A673 (cell line): ENCODE measurements at regions of chr7 and their contacts with region 1.

Region 1: DNA sequence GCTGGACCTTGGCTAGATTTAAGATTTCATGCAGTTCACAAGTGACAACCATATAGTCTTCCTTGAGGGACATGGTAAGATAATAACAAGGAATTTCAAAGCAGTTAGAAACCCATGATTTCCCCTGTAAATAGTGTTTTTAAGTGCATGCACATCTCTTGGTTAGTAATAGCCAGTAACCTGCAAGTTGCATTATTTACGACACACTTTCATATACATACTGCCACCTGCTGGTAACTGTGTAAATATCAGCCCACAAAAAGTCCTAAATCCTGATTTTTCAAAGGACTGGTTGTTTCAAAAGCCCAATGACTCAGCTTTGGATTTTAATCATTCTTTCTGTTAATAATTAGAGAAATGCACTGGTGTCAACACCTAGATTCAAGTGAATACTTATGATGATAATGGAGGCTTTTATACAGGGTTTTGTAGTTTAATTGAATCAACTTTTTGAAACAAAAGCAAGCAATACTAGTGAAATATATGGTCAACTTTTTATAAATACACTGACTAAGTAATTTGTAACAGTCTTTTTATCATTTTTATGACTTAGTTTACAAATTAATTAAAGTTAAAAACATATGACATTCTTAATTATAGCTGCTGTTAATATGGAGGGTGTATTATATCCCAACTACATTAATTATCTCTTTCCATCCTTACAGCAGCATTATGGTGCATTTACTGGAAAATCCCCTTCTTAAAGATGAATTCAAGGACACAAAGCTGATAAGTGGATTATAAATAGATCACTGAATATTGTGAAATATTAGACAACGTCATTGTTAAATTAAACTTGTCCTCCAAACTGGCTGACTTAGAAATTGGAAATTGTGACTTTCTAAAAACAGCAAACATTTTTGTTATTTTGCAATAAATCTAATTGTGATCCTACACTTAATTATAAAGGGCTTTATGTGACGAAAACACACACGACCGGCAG is 367.7 kb upstream of the SEMA3D start:
- DNase-seq: peak; percentile 74
- H3K4me3 ChIP-seq: no peak overlapping the region
- H3K27ac ChIP-seq: no peak overlapping the region
- H3K4me1 ChIP-seq: no peaks in the 10 kb centered on the region
- H3K27me3 ChIP-seq: no peaks in the 10 kb centered on the region
- CTCF ChIP-seq: peak; percentile 80

Region 2: GRCh38 chr7:83936056-83936708 is 1618.3 kb before region 1 on chr7:
- CTCF ChIA-PET with region 1: no interaction called
- POLR2A ChIA-PET with region 1: no interaction called
- intact Hi-C with region 1: loop called (anchors 10 kb)
- DNase-seq: peak; percentile 88
- H3K4me3 ChIP-seq: no peak overlapping the region
- H3K27ac ChIP-seq: no peak overlapping the region
- H3K4me1 ChIP-seq: peaks cover 5% of the 10 kb centered on the region
- H3K27me3 ChIP-seq: no peaks in the 10 kb centered on the region
- CTCF ChIP-seq: peak; percentile 94

Region 3: GRCh38 chr7:85030893-85031292 is 523.6 kb before region 1 on chr7:
- CTCF ChIA-PET with region 1: no interaction called
- POLR2A ChIA-PET with region 1: no interaction called
- intact Hi-C with region 1: loop called (anchors 2 kb)
- DNase-seq: peak; percentile 83
- H3K4me3 ChIP-seq: no peak overlapping the region
- H3K27ac ChIP-seq: no peak overlapping the region
- H3K4me1 ChIP-seq: peaks cover 5% of the 10 kb centered on the region
- H3K27me3 ChIP-seq: no peaks in the 10 kb centered on the region
- CTCF ChIP-seq: peak; percentile 75

Region 4: DNA sequence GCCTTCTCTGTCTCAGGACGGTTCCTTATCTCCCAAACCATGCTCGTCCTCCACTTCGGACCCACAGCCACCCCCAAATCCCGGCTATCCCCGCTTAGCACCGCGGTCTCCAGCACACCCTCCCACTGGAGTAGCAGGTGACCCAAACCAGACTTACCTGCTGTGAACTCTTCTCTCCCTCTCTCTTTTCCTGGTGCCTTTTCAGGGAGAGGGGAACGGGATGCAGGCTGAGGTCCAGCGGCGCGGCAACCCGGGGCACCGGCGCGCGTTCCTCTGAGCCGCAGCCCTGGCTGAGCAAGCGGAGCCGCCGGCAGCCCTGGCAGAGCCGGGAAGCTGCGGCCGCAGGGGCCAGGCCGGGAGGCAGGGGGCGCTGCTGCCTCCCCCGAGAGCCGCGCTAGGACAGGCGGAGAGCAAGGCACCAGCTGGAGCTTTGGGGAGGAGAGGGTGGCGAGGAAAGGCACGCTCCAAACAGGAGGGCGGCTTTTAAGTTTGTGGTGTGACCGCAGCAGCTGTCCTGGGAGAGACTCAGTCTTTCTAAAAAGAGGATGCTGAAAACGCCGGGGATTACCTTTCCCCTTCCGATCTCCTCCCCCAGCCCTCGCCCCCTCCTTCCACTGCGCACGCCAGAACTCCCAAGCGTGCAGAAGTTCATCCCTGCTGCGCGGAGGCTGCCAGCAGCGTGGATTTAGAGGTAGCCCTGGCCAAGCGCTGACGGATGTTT is 367.8 kb before region 1 on chr7 and contains the start of gene SEMA3D:
- CTCF ChIA-PET with region 1: no interaction called
- POLR2A ChIA-PET with region 1: no interaction called
- intact Hi-C with region 1: loop called (anchors 2 kb)
- DNase-seq: peak; percentile 95
- H3K4me3 ChIP-seq: peak within 1 kb of the TSS; percentile 84
- H3K27ac ChIP-seq: peak within 1 kb of the TSS; percentile 84
- H3K4me1 ChIP-seq: peaks cover 15% of the 10 kb centered on the region
- H3K27me3 ChIP-seq: no peaks in the 10 kb centered on the region
- CTCF ChIP-seq: peak; percentile 90
- total RNA-seq, gene SEMA3D: 23.3 and 32.0 TPM in 2 replicates

Region 5: GRCh38 chr7:85471740-85472139 is 82.8 kb before region 1 on chr7:
- CTCF ChIA-PET with region 1: no interaction called
- POLR2A ChIA-PET with region 1: no interaction called
- intact Hi-C with region 1: loop called (anchors 5 kb)
- DNase-seq: no peak
- H3K4me3 ChIP-seq: no peak overlapping the region
- H3K27ac ChIP-seq: no peak overlapping the region
- H3K4me1 ChIP-seq: no peaks in the 10 kb centered on the region
- H3K27me3 ChIP-seq: no peaks in the 10 kb centered on the region
- CTCF ChIP-seq: no peak

Region 6: GRCh38 chr7:85583131-85583953 is 28.8 kb after region 1 on chr7:
- CTCF ChIA-PET with region 1: no interaction called
- POLR2A ChIA-PET with region 1: no interaction called
- intact Hi-C with region 1: no loop called
- DNase-seq: no peak
- H3K4me3 ChIP-seq: no peak overlapping the region
- H3K27ac ChIP-seq: no peak overlapping the region
- H3K4me1 ChIP-seq: no peaks in the 10 kb centered on the region
- H3K27me3 ChIP-seq: no peaks in the 10 kb centered on the region
- CTCF ChIP-seq: no peak

Region 7: DNA sequence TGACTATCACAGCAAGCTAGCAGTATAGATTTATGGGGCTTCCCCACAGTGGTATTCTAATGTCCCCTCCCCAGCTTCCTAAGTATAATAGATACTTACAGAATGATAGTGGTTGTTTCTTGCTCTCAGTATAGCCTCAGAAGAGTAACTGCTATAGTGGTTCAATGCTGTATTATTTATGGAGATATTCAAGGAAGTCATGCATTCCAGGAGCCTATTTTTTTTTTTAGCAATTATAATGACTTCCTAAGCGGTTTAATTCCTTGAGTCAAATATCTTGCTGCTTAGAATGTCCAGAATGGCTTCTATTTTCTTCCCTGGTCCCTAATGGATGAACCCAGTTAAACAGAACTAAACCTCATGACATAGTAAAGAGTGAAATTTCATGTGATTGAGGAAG is 83.9 kb after region 1 on chr7:
- CTCF ChIA-PET with region 1: no interaction called
- POLR2A ChIA-PET with region 1: no interaction called
- intact Hi-C with region 1: no loop called
- DNase-seq: peak; percentile 53
- H3K4me3 ChIP-seq: no peak overlapping the region
- H3K27ac ChIP-seq: no peak overlapping the region
- H3K4me1 ChIP-seq: peaks cover 18% of the 10 kb centered on the region
- H3K27me3 ChIP-seq: no peaks in the 10 kb centered on the region
- CTCF ChIP-seq: no peak

Region 8: DNA sequence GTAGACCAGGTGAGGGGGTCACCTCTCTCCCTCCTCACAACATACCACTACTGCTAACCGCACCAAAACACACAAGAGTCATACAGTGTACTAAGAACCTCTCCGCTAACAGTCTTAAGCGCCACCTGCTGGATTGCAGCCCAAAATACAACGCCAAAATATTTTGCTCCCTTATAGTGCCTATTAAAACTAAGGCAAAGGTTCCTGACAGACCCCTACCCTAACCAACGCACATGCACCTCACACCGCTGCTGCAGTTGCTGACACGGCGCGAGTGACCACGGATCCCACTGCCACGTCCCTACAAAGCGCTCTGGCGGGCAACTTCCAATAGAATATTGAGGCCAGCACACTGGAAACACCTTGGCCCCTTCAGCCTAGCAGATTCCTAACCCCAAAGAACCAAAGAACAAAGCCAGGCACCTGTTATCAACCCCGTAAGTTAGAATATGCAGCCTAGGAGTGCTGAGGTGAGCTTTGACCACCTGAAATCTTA is 196.0 kb after region 1 on chr7:
- CTCF ChIA-PET with region 1: no interaction called
- POLR2A ChIA-PET with region 1: no interaction called
- intact Hi-C with region 1: loop called (anchors 5 kb)
- DNase-seq: peak; percentile 72
- H3K4me3 ChIP-seq: no peak overlapping the region
- H3K27ac ChIP-seq: no peak overlapping the region
- H3K4me1 ChIP-seq: no peaks in the 10 kb centered on the region
- H3K27me3 ChIP-seq: no peaks in the 10 kb centered on the region
- CTCF ChIP-seq: peak; percentile 79

Region 9: DNA sequence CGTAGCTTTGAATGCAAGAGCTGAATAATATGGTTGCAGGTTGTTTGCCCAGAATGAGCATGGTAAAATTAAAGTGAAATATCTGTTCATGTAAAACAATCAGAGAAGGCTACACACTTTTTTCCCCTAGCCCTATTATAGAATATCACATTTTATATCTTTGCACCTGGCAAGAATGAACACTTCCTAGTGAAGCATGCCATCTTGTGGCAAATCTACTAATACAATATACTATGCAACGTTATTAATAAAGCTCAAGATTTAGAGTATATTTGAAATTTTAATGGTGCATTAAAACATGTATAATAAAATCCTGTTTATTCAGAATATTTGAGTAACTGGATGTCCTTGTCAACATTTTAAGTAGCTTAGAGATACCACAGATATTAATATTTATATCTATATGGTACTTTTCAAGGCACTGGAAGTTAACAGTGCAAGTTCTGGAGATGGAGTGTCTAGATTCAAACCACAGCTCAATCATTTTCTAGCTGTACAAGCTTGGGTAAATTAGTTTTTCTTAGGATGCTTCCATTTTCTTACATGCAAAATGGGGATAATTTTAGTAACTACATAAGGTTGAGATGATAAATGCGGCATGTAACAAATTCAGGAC is 275.4 kb after region 1 on chr7:
- CTCF ChIA-PET with region 1: interaction called, 3 read pairs
- POLR2A ChIA-PET with region 1: no interaction called
- intact Hi-C with region 1: loop called (anchors 5 kb)
- DNase-seq: peak; percentile 36
- H3K4me3 ChIP-seq: no peak overlapping the region
- H3K27ac ChIP-seq: no peak overlapping the region
- H3K4me1 ChIP-seq: no peaks in the 10 kb centered on the region
- H3K27me3 ChIP-seq: no peaks in the 10 kb centered on the region
- CTCF ChIP-seq: peak; percentile 56